ENCODE measurements at regions of chr9 and their contacts with region 1.

Region 1: DNA sequence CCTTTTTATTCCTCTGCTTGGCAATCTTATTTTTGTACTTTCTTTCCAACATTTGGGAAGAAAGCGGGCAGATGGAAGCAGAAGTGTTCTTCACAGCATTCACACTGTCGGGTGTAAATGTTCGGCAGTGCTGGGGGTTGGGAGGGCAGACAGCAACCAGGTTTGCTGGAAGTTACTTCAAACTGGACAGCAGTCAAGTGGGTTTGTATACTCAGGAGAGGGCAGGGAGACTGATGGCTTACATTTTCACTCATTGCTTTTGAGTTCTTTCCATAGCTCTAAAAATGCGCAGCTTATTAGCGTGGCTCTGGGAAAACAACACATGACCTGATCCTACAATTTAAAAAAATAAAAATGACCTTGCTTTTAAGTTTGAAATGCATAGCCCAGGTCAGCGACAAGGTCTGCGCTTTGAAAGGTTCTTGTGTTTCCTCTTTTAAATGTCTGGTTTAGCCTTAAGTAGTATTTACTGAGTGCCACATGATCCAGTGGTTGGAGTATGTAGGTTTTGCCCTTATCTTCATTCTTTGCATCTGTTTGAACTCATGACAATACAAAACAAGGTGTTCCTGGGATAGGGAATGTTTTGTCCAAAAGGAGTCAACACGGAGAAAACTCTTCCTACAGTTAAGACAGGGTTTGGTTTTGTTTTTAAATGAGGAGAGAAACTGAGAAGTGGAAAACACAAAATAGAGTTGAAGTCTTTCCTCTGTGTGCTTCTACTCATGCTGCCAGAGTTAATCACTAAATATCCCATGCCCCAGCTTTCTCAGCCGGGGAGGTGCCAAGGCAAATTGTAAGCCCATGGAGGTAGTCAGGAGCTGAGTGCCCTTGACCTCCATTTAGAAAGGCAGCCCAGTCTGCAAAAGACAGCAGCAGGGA is 132.7 kb upstream of the DMRT1 start:
- DNase-seq: no peak
- H3K4me3 ChIP-seq: peak overlapping the region; percentile 12 to 64 (median 42)
- H3K27ac ChIP-seq: peak overlapping the region; percentile 71 to 81
- H3K4me1 ChIP-seq: peaks cover 0 to 10% of the 10 kb centered on the region in 2 donors
- H3K27me3 ChIP-seq: no peaks in the 10 kb centered on the region
- CTCF ChIP-seq: no peak
- POLR2A ChIP-seq: no peak

Region 2: GRCh38 chr9:642014-642413 is 66.8 kb before region 1 on chr9:
- intact Hi-C with region 1: no loop called
- DNase-seq: no peak
- H3K4me3 ChIP-seq: no peak overlapping the region
- H3K27ac ChIP-seq: no peak overlapping the region
- H3K4me1 ChIP-seq: no peaks in the 10 kb centered on the region
- H3K27me3 ChIP-seq: no peaks in the 10 kb centered on the region
- CTCF ChIP-seq: no peak
- POLR2A ChIP-seq: no peak

Region 3: GRCh38 chr9:742914-743589 is 34.3 kb after region 1 on chr9:
- intact Hi-C with region 1: loop called (anchors 1 kb)
- DNase-seq: peak in 1 of 2 donors; percentile 11
- H3K4me3 ChIP-seq: no peak overlapping the region
- H3K27ac ChIP-seq: no peak overlapping the region
- H3K4me1 ChIP-seq: peaks cover 0 to 2% of the 10 kb centered on the region in 2 donors
- H3K27me3 ChIP-seq: no peaks in the 10 kb centered on the region
- CTCF ChIP-seq: no peak
- POLR2A ChIP-seq: no peak